Naive thymus-derived CD4-positive, alpha-beta T cell (primary cell): ENCODE measurements at regions of chr4 and their contacts with region 1.

Region 1: DNA sequence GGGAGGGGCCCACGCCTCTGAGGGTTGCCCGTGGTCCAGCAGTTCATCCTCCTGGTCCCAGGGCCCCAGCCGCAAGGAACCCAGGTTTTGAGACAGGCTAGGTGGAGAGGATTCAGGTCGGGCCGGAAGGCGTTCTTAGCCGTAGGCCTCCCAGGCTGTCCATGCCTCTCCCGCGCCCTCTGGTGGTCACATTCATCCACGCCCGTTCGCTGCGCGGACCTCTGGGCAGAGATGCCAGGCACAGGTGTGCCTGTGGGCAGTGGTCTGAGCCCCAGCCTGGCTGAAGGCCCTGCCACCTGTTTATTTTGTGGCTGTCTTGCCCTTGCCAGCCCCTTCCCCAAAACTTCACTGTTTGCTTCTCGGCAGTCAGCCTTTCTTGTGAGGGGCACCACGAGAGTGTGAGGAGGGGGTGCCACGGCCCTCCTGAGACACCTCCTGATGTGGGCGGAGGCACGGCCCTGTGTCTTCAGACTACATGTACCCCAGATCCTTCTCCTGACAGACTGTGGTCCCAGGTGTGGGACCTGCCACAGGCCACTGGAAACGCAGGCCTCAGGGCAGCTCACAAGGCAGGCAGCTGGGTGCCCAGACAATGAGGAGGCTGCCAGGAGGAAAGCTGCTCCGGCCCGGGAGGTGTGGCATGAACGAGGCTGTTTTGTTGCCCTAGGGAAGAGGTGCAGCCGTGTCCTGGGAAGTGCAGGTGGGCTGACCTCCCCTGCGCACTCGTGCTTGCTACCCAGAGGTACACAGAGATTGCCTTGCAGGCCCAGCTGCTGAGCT is 5.0 kb downstream of the UVSSA start:
- DNase-seq: peak; percentile 71 to 91 (median 83)
- ATAC-seq: peak; percentile 45
- H3K4me3 ChIP-seq: no peak overlapping the region
- H3K4me3 Mint-ChIP-seq: peak overlapping the region in 2 of 10 donors; percentile 50 to 53
- H3K27ac ChIP-seq: peak overlapping the region; percentile 52
- H3K27ac Mint-ChIP-seq: peak overlapping the region in 8 of 9 donors; percentile 48 to 91 (median 74)
- H3K4me1 ChIP-seq: peaks cover 10 to 24% of the 10 kb centered on the region in 2 donors
- H3K4me1 Mint-ChIP-seq: peaks cover 20 to 42% (median 29%) of the 10 kb centered on the region in 7 donors
- H3K27me3 ChIP-seq: no peaks in the 10 kb centered on the region
- H3K27me3 Mint-ChIP-seq: no peaks in the 10 kb centered on the region

Region 2: GRCh38 chr4:1072830-1073446 is 279.1 kb before region 1 on chr4:
- CTCF ChIA-PET with region 1: no interaction called
- POLR2A ChIA-PET with region 1: no interaction called
- intact Hi-C with region 1: loop called in 1 of 2 experiments (anchors 1 kb)
- DNase-seq: peak in 8 of 9 donors; percentile 38 to 66 (median 54)
- ATAC-seq: peak; percentile 90
- H3K4me3 ChIP-seq: no peak overlapping the region
- H3K4me3 Mint-ChIP-seq: peak overlapping the region in 2 of 10 donors; percentile 0 to 9
- H3K27ac ChIP-seq: no peak overlapping the region
- H3K27ac Mint-ChIP-seq: peak overlapping the region in 6 of 9 donors; percentile 1 to 38 (median 18)
- H3K4me1 ChIP-seq: peaks cover 0 to 7% of the 10 kb centered on the region in 2 donors
- H3K4me1 Mint-ChIP-seq: peaks cover 7 to 15% (median 14%) of the 10 kb centered on the region in 7 donors
- H3K27me3 ChIP-seq: no peaks in the 10 kb centered on the region
- H3K27me3 Mint-ChIP-seq: peaks cover 8 to 29% (median 13%) of the 10 kb centered on the region in 5 donors

Region 3: GRCh38 chr4:1277667-1278335 is 74.2 kb before region 1 on chr4:
- CTCF ChIA-PET with region 1: interaction called, 3 read pairs
- POLR2A ChIA-PET with region 1: no interaction called
- intact Hi-C with region 1: loop called in 1 of 2 experiments (anchors 1 kb)
- DNase-seq: peak in 1 of 9 donors; percentile 8
- ATAC-seq: no peak
- H3K4me3 ChIP-seq: no peak overlapping the region
- H3K4me3 Mint-ChIP-seq: no peak overlapping the region
- H3K27ac ChIP-seq: no peak overlapping the region
- H3K27ac Mint-ChIP-seq: no peak overlapping the region
- H3K4me1 ChIP-seq: no peaks in the 10 kb centered on the region
- H3K4me1 Mint-ChIP-seq: no peaks in the 10 kb centered on the region
- H3K27me3 ChIP-seq: no peaks in the 10 kb centered on the region
- H3K27me3 Mint-ChIP-seq: no peaks in the 10 kb centered on the region

Region 4: GRCh38 chr4:1547856-1548826 is 196.1 kb after region 1 on chr4:
- CTCF ChIA-PET with region 1: no interaction called
- POLR2A ChIA-PET with region 1: no interaction called
- intact Hi-C with region 1: no loop called
- DNase-seq: no peak
- ATAC-seq: peak; percentile 1
- H3K4me3 ChIP-seq: no peak overlapping the region
- H3K4me3 Mint-ChIP-seq: peak overlapping the region in 9 of 10 donors; percentile 39 to 74 (median 59)
- H3K27ac ChIP-seq: no peak overlapping the region
- H3K27ac Mint-ChIP-seq: peak overlapping the region in 4 of 9 donors; percentile 70 to 81 (median 78)
- H3K4me1 ChIP-seq: peaks cover 0 to 11% of the 10 kb centered on the region in 2 donors
- H3K4me1 Mint-ChIP-seq: peaks cover 3 to 33% (median 21%) of the 10 kb centered on the region in 7 donors
- H3K27me3 ChIP-seq: no peaks in the 10 kb centered on the region
- H3K27me3 Mint-ChIP-seq: peaks cover 0 to 9% (median 3%) of the 10 kb centered on the region in 5 donors

Region 5: GRCh38 chr4:1604711-1605205 is 252.7 kb after region 1 on chr4:
- CTCF ChIA-PET with region 1: interaction called, 24 read pairs
- POLR2A ChIA-PET with region 1: interaction called, 14 read pairs
- intact Hi-C with region 1: loop called in 1 of 2 experiments (anchors 1 kb)
- DNase-seq: peak in 7 of 9 donors; percentile 55 to 81 (median 70)
- ATAC-seq: peak; percentile 80
- H3K4me3 ChIP-seq: peak overlapping the region; percentile 46
- H3K4me3 Mint-ChIP-seq: peak overlapping the region in 9 of 10 donors; percentile 55 to 84 (median 75)
- H3K27ac ChIP-seq: peak overlapping the region; percentile 45
- H3K27ac Mint-ChIP-seq: peak overlapping the region in 8 of 9 donors; percentile 77 to 97 (median 86)
- H3K4me1 ChIP-seq: peaks cover 10 to 29% of the 10 kb centered on the region in 2 donors
- H3K4me1 Mint-ChIP-seq: peaks cover 0 to 35% (median 13%) of the 10 kb centered on the region in 7 donors
- H3K27me3 ChIP-seq: no peaks in the 10 kb centered on the region
- H3K27me3 Mint-ChIP-seq: no peaks in the 10 kb centered on the region